Esophagus muscularis mucosa (tissue), 4 donors: ENCODE measurements at regions of chr18 and their contacts with region 1.

Region 1: DNA sequence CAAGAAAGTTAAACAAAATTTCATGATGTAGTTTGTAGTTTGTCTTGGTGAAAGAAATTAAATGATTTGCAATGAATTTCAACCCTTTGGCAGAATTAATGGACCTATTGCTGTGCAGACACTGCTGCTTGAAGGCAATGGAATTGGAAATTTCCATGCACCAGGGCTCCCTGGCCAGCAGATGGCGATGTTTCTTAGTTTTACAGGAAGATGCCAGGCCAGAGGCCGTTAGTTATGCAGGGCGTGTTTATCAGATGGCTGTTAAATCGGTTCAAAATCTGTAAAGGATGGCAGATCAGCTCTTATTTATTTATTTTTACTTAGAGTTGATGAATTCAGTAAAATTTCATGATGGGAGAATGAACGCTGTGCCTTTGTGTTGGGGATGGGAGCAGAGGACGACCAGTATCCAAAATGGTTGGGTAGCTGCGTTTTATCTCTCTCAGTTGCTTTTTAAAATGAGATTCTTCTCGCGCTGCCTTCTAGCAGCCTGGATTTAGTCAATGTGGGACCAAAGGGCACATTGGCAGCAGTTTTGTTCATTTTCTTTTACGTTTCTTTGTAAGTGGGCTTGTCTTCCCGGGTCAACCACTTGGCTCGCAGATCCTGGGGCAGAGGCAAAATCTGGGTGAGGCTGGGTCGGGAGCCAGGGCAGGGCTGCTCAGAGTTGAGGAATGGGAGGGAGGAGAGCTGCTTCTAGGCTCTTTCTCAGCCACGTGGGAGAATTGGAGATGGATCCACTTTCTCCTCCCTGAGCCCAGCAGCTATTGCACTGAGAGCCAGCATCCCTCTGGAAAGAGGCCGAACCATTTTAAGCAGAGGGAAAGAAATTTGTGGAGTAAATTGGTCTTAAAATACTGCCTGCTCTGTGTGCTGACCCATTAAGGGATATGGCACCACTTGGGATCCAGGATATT is 344.0 kb downstream of the PIK3C3 start:
- DNase-seq: no peak
- H3K4me3 ChIP-seq: peak overlapping the region; percentile 30 to 50 (median 40)
- H3K27ac ChIP-seq: peak overlapping the region; percentile 15 to 68 (median 57)
- H3K4me1 ChIP-seq: peaks cover 3 to 9% (median 8%) of the 10 kb centered on the region in 4 donors
- H3K27me3 ChIP-seq: no peaks in the 10 kb centered on the region
- CTCF ChIP-seq: peak; percentile 86 to 93 (median 91)
- EP300 ChIP-seq: no peak
- POLR2A ChIP-seq: no peak

Region 2: DNA sequence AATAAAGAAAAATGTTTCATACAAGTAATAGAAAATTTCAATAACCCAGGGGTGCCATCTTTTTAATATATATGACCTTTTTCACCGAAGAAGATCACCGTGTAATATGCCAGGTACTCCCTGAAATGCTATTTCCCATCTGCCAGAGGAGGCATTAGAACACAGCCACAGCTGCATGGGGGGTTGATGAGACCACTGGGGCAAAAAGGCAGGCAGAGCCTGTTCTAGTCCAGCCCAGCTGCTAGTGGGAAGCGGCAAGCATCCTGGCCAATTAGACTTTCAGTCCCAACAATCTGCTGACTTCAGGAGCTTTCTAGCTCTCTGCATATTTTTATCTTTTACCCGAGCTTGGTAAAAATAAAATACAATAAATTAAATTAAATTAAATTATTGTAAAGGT is 453.9 kb after region 1 on chr18:
- intact Hi-C with region 1: no loop called
- DNase-seq: no peak
- H3K4me3 ChIP-seq: no peak overlapping the region
- H3K27ac ChIP-seq: no peak overlapping the region
- H3K4me1 ChIP-seq: no peaks in the 10 kb centered on the region
- H3K27me3 ChIP-seq: no peaks in the 10 kb centered on the region
- CTCF ChIP-seq: no peak
- EP300 ChIP-seq: no peak
- POLR2A ChIP-seq: no peak

Region 3: GRCh38 chr18:43271593-43272432 is 972.8 kb after region 1 on chr18:
- intact Hi-C with region 1: loop called (anchors 5 kb)
- DNase-seq: no peak
- H3K4me3 ChIP-seq: no peak overlapping the region
- H3K27ac ChIP-seq: no peak overlapping the region
- H3K4me1 ChIP-seq: no peaks in the 10 kb centered on the region
- H3K27me3 ChIP-seq: peaks cover 0 to 6% (median 0%) of the 10 kb centered on the region in 4 donors
- CTCF ChIP-seq: peak; percentile 68 to 84 (median 78)
- EP300 ChIP-seq: no peak
- POLR2A ChIP-seq: no peak

Region 4: GRCh38 chr18:43563780-43564179 is 1264.8 kb after region 1 on chr18:
- intact Hi-C with region 1: loop called (anchors 10 kb)
- DNase-seq: no peak
- H3K4me3 ChIP-seq: no peak overlapping the region
- H3K27ac ChIP-seq: no peak overlapping the region
- H3K4me1 ChIP-seq: peaks cover 0 to 6% (median 2%) of the 10 kb centered on the region in 4 donors
- H3K27me3 ChIP-seq: no peaks in the 10 kb centered on the region
- CTCF ChIP-seq: peak; percentile 50 to 56 (median 52)
- EP300 ChIP-seq: no peak
- POLR2A ChIP-seq: no peak